ENCODE measurements at regions of chr12 and their contacts with region 1.

Region 1: GRCh38 chr12:1650260-1650977 is 21.4 kb downstream of the WNT5B start:
- DNase-seq: no peak
- H3K4me3 ChIP-seq: no peak overlapping the region
- H3K4me3 Mint-ChIP-seq: no peak overlapping the region
- H3K27ac Mint-ChIP-seq: no peak overlapping the region
- H3K4me1 ChIP-seq: no peaks in the 10 kb centered on the region
- H3K4me1 Mint-ChIP-seq: no peaks in the 10 kb centered on the region
- H3K27me3 ChIP-seq: no peaks in the 10 kb centered on the region
- H3K27me3 Mint-ChIP-seq: no peaks in the 10 kb centered on the region
- CTCF ChIP-seq: no peak

Region 2: DNA sequence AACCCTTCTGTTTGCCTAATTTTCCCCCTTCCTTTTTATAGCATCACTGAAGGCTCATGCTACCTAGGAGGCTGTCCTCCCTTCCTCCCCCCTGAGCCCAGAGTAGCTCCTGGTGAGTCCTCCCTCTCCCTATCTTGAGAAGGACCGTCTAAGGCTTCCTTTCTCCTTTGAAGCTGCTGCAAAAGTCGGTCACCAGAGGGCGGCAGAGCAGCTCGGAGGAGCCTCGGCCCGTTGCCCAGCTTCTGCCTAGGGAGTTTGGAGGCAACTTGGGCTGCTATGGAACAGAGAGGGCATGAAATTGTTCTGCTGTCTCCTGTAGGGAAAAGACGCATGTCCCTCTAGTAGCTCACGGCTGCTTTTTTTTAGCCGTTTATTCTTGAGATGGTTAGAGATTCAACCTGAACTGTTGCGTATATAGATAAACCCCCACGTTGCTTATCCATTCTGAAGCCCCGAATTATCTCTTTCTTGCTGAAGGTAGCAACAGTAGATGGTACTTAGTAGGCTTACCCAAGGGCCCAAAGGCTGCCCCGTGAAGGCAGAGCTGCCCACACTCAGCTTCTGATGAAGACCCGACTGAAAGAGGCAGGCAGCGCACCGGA is 15.7 kb before region 1 on chr12:
- CTCF ChIA-PET with region 1: interaction called, 22 read pairs
- POLR2A ChIA-PET with region 1: interaction called, 3 read pairs
- intact Hi-C with region 1: no loop called
- DNase-seq: peak; percentile 79 to 87
- H3K4me3 ChIP-seq: no peak overlapping the region
- H3K4me3 Mint-ChIP-seq: no peak overlapping the region
- H3K27ac Mint-ChIP-seq: no peak overlapping the region
- H3K4me1 ChIP-seq: peaks cover 17% of the 10 kb centered on the region
- H3K4me1 Mint-ChIP-seq: peaks cover 16% of the 10 kb centered on the region
- H3K27me3 ChIP-seq: no peaks in the 10 kb centered on the region
- H3K27me3 Mint-ChIP-seq: no peaks in the 10 kb centered on the region
- CTCF ChIP-seq: peak; percentile 93 to 96

Region 3: DNA sequence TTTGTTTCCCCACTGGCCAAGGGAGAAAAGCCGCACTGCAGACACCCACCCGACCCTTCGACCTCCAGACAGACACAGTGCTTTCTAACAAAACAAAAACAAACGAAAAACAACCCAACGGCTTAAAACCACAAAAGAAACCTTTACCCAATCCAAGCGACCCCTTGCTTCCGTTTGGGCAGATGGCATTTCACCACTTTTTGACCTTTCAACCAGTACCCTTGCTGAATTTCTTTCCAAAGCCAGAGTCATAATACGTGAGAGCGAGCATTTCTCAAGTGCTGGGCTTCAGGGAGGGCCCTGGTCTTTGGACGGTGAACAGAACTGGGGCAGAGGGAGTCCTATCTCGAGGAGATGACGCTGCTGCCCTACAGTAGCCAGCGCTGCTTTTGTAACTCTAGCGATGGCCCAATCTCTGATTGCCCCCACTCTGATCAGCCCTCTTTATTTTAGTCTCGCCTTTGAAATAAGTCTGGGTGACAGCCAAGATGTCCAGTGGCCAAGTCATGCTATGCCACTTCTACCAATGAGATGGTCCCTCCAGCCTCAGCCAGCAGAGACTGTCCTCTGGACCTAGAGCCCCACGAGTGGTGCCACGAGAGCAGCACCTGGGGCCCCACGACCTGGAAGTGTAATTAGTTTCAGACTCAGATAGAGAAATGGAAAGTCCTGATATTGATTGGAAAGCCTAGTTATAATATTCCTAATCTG is 18.6 kb after region 1 on chr12:
- CTCF ChIA-PET with region 1: interaction called, 12 read pairs
- POLR2A ChIA-PET with region 1: no interaction called
- intact Hi-C with region 1: no loop called
- DNase-seq: no peak
- H3K4me3 ChIP-seq: no peak overlapping the region
- H3K4me3 Mint-ChIP-seq: no peak overlapping the region
- H3K27ac Mint-ChIP-seq: peak overlapping the region; percentile 46
- H3K4me1 ChIP-seq: peaks cover 28% of the 10 kb centered on the region
- H3K4me1 Mint-ChIP-seq: peaks cover 22% of the 10 kb centered on the region
- H3K27me3 ChIP-seq: no peaks in the 10 kb centered on the region
- H3K27me3 Mint-ChIP-seq: no peaks in the 10 kb centered on the region
- CTCF ChIP-seq: no peak

Region 4: GRCh38 chr12:1787714-1788113 is 137.3 kb after region 1 on chr12:
- CTCF ChIA-PET with region 1: interaction called, 97 read pairs
- POLR2A ChIA-PET with region 1: interaction called, 4 read pairs
- intact Hi-C with region 1: loop called (anchors 1 kb)
- DNase-seq: no peak
- H3K4me3 ChIP-seq: no peak overlapping the region
- H3K4me3 Mint-ChIP-seq: no peak overlapping the region
- H3K27ac Mint-ChIP-seq: no peak overlapping the region
- H3K4me1 ChIP-seq: no peaks in the 10 kb centered on the region
- H3K4me1 Mint-ChIP-seq: no peaks in the 10 kb centered on the region
- H3K27me3 ChIP-seq: no peaks in the 10 kb centered on the region
- H3K27me3 Mint-ChIP-seq: no peaks in the 10 kb centered on the region
- CTCF ChIP-seq: no peak

Region 5: GRCh38 chr12:1972856-1973317 is 322.5 kb after region 1 on chr12:
- CTCF ChIA-PET with region 1: no interaction called
- POLR2A ChIA-PET with region 1: no interaction called
- intact Hi-C with region 1: no loop called
- DNase-seq: peak in 1 of 2 experiments; percentile 4
- H3K4me3 ChIP-seq: no peak overlapping the region
- H3K4me3 Mint-ChIP-seq: peak overlapping the region; percentile 38
- H3K27ac Mint-ChIP-seq: no peak overlapping the region
- H3K4me1 ChIP-seq: peaks cover 12% of the 10 kb centered on the region; the same call in 1 of the 2 replicates
- H3K4me1 Mint-ChIP-seq: peaks cover 8% of the 10 kb centered on the region
- H3K27me3 ChIP-seq: no peaks in the 10 kb centered on the region
- H3K27me3 Mint-ChIP-seq: no peaks in the 10 kb centered on the region
- CTCF ChIP-seq: no peak

Measured in Caco-2 (cell line).